ENCODE measurements at regions of chr2 and their contacts with region 1.

Region 1: DNA sequence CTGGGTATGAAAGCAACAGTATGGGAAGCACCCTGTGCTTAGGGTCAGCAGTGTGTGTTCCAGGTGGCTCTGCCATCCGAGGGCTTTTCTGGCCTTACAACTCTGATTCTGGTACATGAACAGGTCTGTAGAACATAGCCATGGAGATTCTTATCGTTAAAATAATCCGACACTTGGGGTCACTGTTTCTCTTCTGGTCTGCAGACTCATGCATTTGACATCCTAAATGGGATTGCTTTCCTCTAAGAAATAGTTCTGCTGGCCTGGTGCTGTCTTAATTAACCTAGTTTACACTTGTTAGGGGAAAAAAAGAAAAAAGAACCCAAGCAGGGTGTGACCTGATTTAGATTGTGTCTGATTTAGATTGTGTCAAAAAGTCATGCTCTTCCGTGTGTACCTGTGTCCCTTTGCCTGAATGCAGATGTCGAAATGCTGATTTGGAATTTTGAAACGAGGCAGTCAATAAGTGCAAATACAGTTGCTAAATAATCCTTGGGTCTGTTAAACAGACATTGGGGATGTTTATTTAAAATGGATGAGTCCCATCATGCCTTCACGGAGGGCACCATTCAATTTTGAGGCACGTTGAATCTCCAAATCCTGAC is 59.6 kb downstream of the TRPM8 start:
- DNase-seq: no peak
- H3K4me3 ChIP-seq: no peak overlapping the region
- H3K27ac ChIP-seq: no peak overlapping the region
- H3K4me1 ChIP-seq: no peaks in the 10 kb centered on the region
- H3K27me3 ChIP-seq: no peaks in the 10 kb centered on the region
- CTCF ChIP-seq: peak; percentile 16

Region 2: GRCh38 chr2:233867993-233868532 is 108.7 kb before region 1 on chr2 and contains the start of gene MSL3B:
- intact Hi-C with region 1: no loop called
- DNase-seq: peak; percentile 49
- H3K4me3 ChIP-seq: peak within 1 kb of the TSS; percentile 49
- H3K27ac ChIP-seq: no peak within 1 kb of the TSS
- H3K4me1 ChIP-seq: no peaks in the 10 kb centered on the region
- H3K27me3 ChIP-seq: no peaks in the 10 kb centered on the region
- CTCF ChIP-seq: no peak

Region 3: GRCh38 chr2:234544659-234545611 is 568.1 kb after region 1 on chr2:
- intact Hi-C with region 1: loop called (anchors 10 kb)
- DNase-seq: peak; percentile 68
- H3K4me3 ChIP-seq: no peak overlapping the region
- H3K27ac ChIP-seq: no peak overlapping the region
- H3K4me1 ChIP-seq: no peaks in the 10 kb centered on the region
- H3K27me3 ChIP-seq: no peaks in the 10 kb centered on the region
- CTCF ChIP-seq: peak; percentile 95

Region 4: DNA sequence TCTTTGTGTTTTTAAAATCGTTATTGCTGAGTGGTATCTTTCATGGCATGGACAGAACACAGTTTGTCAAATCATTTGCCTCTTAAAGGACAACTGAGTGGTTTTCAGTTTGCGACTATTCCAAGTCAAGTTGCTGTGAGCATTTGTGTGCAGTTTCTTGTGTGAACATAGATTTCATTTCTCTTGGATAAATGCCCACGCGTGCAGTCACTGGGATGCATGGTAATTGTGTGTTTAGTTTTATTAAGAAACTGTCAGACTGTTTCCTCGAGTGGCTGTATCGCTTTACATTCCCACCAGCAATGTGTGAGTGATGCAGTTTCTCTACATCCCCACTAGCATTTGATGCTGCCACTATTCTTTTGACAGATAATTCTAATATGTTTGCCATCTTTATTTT is 674.1 kb after region 1 on chr2:
- intact Hi-C with region 1: no loop called
- DNase-seq: no peak
- H3K4me3 ChIP-seq: no peak overlapping the region
- H3K27ac ChIP-seq: no peak overlapping the region
- H3K4me1 ChIP-seq: no peaks in the 10 kb centered on the region
- H3K27me3 ChIP-seq: no peaks in the 10 kb centered on the region
- CTCF ChIP-seq: no peak